ENCODE measurements at regions of chr1 and their contacts with region 1.

Region 1: DNA sequence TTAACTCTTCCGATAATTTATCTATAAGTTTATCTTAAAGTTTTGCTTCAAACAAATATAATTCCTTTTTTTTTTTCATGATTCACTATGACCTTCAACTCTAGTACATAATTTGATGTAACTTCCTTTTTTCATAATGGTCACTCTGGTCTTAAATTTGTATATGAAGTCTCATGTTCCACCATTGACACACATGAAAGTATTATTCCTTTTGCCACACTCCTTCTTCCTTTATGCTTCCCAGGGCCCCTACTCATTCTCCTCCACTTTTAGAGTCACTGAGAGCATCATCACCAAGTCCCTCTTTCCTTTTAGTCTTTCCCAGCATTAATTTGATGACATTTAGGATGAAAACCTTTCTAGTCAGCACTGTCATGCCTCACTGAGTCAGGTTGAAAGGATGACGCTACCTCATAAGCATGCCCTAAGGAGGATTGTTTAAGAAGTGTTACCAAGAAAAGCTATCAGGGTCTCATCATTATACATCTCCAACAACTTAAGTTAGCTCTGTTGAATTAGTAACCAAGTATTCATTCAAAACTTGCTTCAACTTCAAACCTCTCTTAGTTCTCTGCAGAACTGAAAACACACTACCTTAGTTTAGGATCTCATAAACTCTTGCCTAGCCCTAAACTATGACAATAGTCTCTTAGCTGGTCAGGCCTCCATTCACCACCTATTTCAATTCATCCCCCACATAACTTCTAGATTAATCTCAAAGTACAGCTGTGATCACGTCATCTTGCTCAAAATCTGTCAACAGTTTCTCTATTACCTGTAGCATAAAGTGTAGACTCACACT is 14.5 kb downstream of the AUNIP start:
- DNase-seq: no peak
- H3K4me3 ChIP-seq: no peak overlapping the region
- H3K27ac ChIP-seq: no peak overlapping the region
- H3K4me1 ChIP-seq: no peaks in the 10 kb centered on the region
- H3K27me3 ChIP-seq: no peaks in the 10 kb centered on the region
- CTCF ChIP-seq: no peak

Region 2: DNA sequence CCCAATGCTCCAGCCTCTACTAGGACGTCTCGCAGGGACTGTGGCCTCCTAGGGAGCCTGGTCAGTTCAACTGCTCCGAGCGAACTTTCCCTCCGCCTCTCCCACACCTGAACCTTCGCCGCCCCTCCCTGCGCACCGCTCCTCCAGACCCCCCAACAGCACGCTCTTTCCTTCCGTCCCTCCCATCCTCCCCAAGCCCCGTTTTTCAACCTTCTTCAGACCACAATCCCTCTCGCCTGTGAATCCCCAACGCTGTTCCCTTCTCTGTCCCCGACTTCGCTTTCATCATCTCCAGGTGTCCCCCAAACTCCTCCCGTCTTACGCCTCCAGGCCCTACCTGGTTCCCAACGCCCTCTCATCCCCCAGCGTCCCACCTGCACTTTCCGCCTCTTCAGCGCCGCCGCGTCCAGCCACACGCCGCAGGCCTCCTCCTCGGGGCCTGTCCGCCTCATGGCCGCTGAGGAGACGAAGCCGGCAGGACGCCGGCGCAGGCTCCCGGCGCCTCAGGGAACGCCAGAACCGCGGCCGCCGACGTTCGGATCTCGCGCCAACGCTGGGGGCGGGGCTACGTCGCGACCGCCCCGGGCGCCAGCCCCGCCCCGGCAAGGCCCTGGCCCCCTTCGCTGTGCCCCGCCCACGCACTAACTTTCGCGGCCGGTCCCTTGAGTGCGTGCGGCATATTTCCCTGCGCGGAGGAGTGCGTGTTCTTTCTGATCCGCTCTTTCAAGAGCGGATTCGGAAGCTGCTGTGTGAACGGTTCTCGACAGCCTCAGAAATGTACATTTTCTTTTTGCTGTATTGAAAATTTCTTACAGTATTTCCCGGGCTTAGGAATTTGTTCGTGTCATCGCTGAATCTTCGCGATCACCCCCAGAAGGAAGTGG is 14.4 kb after region 1 on chr1 and contains the start of gene AUNIP:
- CTCF ChIA-PET with region 1: no interaction called
- POLR2A ChIA-PET with region 1: interaction called, 36 read pairs
- intact Hi-C with region 1: no loop called
- DNase-seq: peak; percentile 64 to 89
- H3K4me3 ChIP-seq: peak within 1 kb of the TSS; percentile 99
- H3K27ac ChIP-seq: peak within 1 kb of the TSS; percentile 74
- H3K4me1 ChIP-seq: peaks cover 10% of the 10 kb centered on the region
- H3K27me3 ChIP-seq: no peaks in the 10 kb centered on the region
- CTCF ChIP-seq: no peak
- total RNA-seq, gene AUNIP: 11.0 and 11.3 TPM in 2 replicates

Region 3: GRCh38 chr1:26279456-26280332 is 435.0 kb after region 1 on chr1 and contains the start of gene SH3BGRL3:
- CTCF ChIA-PET with region 1: no interaction called
- POLR2A ChIA-PET with region 1: no interaction called
- intact Hi-C with region 1: no loop called
- DNase-seq: peak; percentile 61 to 84
- H3K4me3 ChIP-seq: peak within 1 kb of the TSS; percentile 62
- H3K27ac ChIP-seq: peak within 1 kb of the TSS; percentile 63
- H3K4me1 ChIP-seq: peaks cover 63% of the 10 kb centered on the region
- H3K27me3 ChIP-seq: no peaks in the 10 kb centered on the region
- CTCF ChIP-seq: peak; percentile 32; the same call in 1 of the 2 replicates
- total RNA-seq, gene SH3BGRL3: 168 and 206 TPM in 2 replicates